Activated T-helper 2 cell treated with anti-CD3 and anti-CD28 coated beads, Interferon-gamma antibody, Interleukin-2, Interleukin-4, amounts not matched to agents 10 μg/mL and 5 μg/mL and 100 μg/mL, durations not matched to agents 14 hours and 24 hours and 36 hours (primary cell): ENCODE measurements at regions of chr10 and their contacts with region 1.

Region 1: GRCh38 chr10:104268716-104269645 is at the start of gene GSTO2:
- DNase-seq: peak; percentile 98
- H3K4me3 Mint-ChIP-seq: peak within 1 kb of the TSS; percentile 92
- H3K27ac Mint-ChIP-seq: peak within 1 kb of the TSS; percentile 92
- H3K4me1 Mint-ChIP-seq: peaks cover 36% of the 10 kb centered on the region
- H3K27me3 Mint-ChIP-seq: no peaks in the 10 kb centered on the region
- total RNA-seq, gene GSTO2: 0.57 and 1.4 TPM in 2 replicates

Region 2: DNA sequence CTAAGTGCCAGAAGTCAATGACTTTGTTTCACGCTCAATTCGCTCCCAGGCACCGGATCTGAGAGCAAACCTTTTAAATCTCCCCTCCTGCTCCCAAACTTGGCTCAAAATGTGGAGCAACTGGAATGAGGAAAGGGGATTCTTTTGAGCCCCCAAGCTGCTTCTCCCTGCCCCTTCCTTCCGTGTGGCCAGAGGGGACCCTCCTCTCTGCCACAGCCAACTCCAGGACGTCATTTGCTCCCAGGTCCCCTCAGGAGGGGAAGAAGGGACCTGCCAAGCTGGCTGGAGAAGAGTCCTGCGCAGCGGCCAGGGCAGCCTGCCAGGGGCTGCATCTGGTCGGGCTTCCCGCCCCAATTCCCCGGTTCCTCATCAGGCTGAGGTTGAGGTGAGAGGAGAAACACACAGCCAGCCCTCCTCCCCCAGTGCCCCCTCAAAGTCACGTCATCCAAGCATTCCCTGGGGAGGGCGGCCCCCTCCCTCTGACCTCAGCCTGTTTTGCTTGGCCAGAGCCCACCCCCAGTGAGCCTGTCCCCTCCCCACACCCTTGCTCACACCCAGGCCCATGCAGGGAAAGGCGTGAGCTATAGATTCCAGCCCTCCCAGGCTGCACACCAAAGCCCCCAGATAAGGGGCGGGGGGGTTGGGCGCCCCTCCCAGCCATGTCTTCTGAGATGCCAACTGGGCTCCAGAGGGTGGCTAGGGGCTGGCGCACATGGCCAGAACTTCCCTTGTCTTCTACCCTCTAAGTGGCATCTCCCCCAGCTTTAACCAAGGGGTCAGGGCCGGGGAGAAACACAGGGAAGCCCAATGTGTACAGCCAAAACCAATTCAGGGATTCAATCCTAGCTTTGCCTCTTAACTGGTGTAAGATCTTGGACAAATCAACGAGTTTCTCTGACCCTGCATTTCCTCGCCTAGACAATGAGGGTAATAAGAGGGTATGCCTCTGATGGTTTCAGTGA is 448.6 kb before region 1 on chr10:
- intact Hi-C with region 1: no loop called
- DNase-seq: no peak
- H3K4me3 Mint-ChIP-seq: no peak overlapping the region
- H3K27ac Mint-ChIP-seq: no peak overlapping the region
- H3K4me1 Mint-ChIP-seq: peaks cover 5% of the 10 kb centered on the region
- H3K27me3 Mint-ChIP-seq: peaks cover 36% of the 10 kb centered on the region

Region 3: DNA sequence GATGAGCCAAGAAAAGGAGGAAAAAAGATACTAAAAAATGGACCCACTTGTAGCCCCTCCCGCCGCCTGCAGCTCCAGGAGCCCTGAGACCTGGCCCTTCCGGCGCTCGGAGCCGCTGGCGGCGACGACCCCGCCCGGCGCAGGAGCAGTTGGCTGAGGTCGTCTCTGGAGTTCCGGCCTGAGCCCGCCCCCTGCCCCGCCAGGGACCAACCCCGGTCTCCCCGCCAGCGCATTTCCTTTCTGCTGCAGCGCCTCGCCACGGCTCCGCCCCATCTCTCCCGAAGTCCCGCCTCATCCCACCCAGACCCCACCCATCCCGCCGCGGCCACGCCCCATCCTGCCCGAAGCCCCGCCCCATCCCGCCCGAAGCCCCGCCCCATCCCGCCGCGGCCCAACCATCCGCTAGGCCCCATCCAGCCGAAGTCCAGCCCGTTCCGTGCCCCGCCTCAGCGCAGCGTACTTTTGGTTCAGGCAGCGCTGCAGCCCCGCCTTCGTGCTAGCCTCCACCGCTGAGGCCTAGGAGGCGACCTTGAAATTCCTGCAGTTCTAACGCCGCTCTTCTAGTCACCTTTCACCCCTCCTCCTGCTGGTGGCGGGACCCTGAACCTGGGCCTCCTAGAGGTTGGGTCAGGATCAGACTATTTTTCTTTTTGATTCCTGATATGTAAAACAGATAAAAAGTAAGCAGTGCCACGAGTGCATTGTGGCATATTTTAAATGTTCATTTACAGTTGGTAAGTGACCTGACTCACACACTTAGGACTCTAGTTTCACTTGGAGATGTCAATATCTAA is 350.7 kb before region 1 on chr10 and contains the start of gene STN1:
- intact Hi-C with region 1: loop called (anchors 2 kb)
- DNase-seq: peak; percentile 95
- H3K4me3 Mint-ChIP-seq: peak within 1 kb of the TSS; percentile 86
- H3K27ac Mint-ChIP-seq: peak within 1 kb of the TSS; percentile 96
- H3K4me1 Mint-ChIP-seq: peaks cover 31% of the 10 kb centered on the region
- H3K27me3 Mint-ChIP-seq: no peaks in the 10 kb centered on the region
- total RNA-seq, gene STN1: 21.7 and 25.1 TPM in 2 replicates

Region 4: DNA sequence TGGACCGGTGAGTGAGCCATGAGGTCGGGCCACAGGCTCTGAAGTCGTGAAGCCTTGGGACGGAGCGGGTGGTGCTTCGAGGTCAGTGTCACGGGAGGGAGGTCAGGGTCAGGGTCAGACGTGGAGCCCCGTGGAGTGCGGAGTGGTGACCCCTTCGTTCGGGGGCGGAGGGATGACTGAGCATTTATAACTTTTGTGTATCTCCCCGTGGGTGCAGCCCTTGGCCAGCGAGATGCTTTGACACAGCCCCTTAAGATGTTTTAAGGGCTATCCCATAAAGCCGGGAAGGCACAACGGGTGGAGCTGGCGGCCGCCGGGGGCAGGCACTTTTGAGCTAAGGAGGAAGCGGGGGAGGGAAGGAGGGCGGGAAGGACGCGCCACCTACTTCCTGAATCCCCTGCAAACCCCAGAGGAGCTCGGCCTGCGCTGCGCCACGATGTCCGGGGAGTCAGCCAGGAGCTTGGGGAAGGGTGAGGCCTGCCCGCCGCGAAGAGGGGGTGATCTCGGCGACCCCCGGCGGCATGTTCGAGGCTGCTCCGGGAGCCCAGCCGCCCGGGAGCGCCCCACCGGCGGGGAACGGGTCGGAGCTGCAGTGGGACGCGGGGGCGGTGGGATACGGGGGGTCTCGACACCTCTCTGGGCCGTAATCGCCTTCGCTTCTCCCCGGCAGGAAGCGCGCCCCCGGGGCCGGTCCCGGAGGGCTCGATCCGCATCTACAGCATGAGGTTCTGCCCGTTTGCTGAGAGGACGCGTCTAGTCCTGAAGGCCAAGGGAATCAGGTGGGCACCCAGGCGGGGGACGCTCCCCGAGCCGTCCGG is 14.3 kb before region 1 on chr10 and contains the start of gene GSTO1:
- intact Hi-C with region 1: loop called (anchors 1 kb)
- DNase-seq: peak; percentile 26
- H3K4me3 Mint-ChIP-seq: peak within 1 kb of the TSS; percentile 99
- H3K27ac Mint-ChIP-seq: peak within 1 kb of the TSS; percentile 97
- H3K4me1 Mint-ChIP-seq: peaks cover 49% of the 10 kb centered on the region
- H3K27me3 Mint-ChIP-seq: peaks cover 7% of the 10 kb centered on the region
- total RNA-seq, gene GSTO1: 168 and 174 TPM in 2 replicates

Region 5: GRCh38 chr10:104337974-104338735 is 69.2 kb after region 1 on chr10 and contains the start of gene ITPRIP:
- intact Hi-C with region 1: loop called (anchors 1 kb)
- DNase-seq: peak; percentile 74
- H3K4me3 Mint-ChIP-seq: peak within 1 kb of the TSS; percentile 97
- H3K27ac Mint-ChIP-seq: peak within 1 kb of the TSS; percentile 99
- H3K4me1 Mint-ChIP-seq: peaks cover 46% of the 10 kb centered on the region
- H3K27me3 Mint-ChIP-seq: peaks cover 1% of the 10 kb centered on the region
- total RNA-seq, gene ITPRIP: 17.1 and 18.8 TPM in 2 replicates

Region 6: GRCh38 chr10:105370692-105371091 is 1101.7 kb after region 1 on chr10:
- intact Hi-C with region 1: no loop called
- DNase-seq: no peak
- H3K4me3 Mint-ChIP-seq: no peak overlapping the region
- H3K27ac Mint-ChIP-seq: no peak overlapping the region
- H3K4me1 Mint-ChIP-seq: no peaks in the 10 kb centered on the region
- H3K27me3 Mint-ChIP-seq: no peaks in the 10 kb centered on the region